ENCODE measurements at regions of chr5 and their contacts with region 1.

Region 1: DNA sequence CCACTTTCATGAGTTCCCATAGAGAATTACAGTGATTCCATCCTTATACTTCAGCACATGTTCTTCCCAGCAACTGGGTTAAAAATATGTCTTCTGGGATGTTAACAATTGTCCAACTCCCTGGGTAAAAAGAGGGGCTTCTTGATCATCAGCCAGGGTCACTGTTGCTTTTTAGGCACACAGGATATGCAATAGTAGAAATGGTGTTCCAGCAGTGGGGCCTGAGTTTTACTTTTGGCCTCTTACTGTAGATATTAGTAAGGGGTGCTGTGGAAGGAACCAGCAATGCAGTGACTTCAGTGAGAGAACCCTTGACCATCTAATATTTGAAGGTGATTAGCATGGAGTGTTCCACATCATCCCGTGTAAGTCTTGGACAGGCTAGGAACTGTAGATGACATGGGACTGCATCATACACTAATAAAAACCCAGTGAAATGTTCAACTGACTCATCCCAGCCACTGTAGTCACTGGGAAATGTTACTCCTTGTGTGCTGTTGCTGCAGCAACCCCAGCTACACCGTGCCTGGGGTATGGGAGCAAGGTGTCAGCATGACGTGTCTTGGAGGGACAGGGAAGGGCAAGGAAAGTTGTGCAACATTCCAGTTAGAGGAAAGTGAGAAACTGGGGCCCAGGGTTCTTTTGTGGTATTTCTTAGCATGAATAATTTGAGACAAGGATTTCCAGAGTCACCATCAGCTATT is 610.9 kb downstream of the RAB3C start:
- DNase-seq: peak; percentile 100
- H3K4me3 ChIP-seq: no peak overlapping the region
- H3K27ac ChIP-seq: peak overlapping the region; percentile 97
- H3K4me1 ChIP-seq: peaks cover 15% of the 10 kb centered on the region
- H3K27me3 ChIP-seq: no peaks in the 10 kb centered on the region
- CTCF ChIP-seq: no peak

Region 2: GRCh38 chr5:59115345-59115744 is 78.4 kb before region 1 on chr5:
- CTCF ChIA-PET with region 1: no interaction called
- dilution Hi-C with region 1: no loop called
- in situ Hi-C with region 1: no loop called
- intact Hi-C with region 1: no loop called
- DNase-seq: peak; percentile 18
- H3K4me3 ChIP-seq: no peak overlapping the region
- H3K27ac ChIP-seq: no peak overlapping the region
- H3K4me1 ChIP-seq: peaks cover 16% of the 10 kb centered on the region
- H3K27me3 ChIP-seq: no peaks in the 10 kb centered on the region
- CTCF ChIP-seq: no peak

Region 3: GRCh38 chr5:59296317-59297264 is 102.8 kb after region 1 on chr5:
- CTCF ChIA-PET with region 1: no interaction called
- dilution Hi-C with region 1: no loop called
- in situ Hi-C with region 1: no loop called
- intact Hi-C with region 1: loop called (anchors 1 kb)
- DNase-seq: peak; percentile 62
- H3K4me3 ChIP-seq: peak overlapping the region; percentile 36 to 49 (median 42)
- H3K27ac ChIP-seq: peak overlapping the region; percentile 78
- H3K4me1 ChIP-seq: peaks cover 35% of the 10 kb centered on the region
- H3K27me3 ChIP-seq: no peaks in the 10 kb centered on the region
- CTCF ChIP-seq: no peak

Region 4: DNA sequence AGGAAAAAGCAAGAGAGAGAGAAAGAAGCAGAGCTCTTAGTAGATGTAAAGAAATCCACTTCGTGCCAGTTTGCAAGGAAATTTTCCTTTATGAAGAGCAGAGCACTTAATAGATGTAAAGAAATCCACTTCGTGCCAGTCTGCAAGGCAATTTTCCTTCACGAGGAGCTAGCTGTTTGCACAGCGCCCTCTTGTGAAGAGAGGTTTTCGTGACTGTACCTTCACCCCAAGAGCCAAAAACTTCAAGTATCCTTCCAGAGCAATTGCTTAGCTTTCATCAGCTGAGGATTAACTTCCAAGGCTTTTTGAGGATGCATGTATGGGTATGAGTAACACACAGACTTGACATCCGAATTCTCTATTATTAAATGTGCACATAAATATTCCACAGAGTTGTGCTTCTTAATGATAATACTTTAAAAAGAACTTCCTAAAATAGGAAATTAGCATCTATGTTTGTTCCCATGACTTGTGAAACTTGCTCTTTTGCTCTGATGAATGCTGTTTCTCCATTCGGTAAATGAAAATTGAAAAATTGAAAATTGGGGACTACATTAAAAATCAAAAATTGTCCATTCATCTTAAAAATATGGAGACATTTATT is 174.1 kb after region 1 on chr5:
- CTCF ChIA-PET with region 1: interaction called, 12 read pairs
- dilution Hi-C with region 1: no loop called
- in situ Hi-C with region 1: loop called in 1 of 2 experiments (anchors 10 kb)
- intact Hi-C with region 1: loop called (anchors 1 kb)
- DNase-seq: peak; percentile 44
- H3K4me3 ChIP-seq: no peak overlapping the region
- H3K27ac ChIP-seq: no peak overlapping the region
- H3K4me1 ChIP-seq: no peaks in the 10 kb centered on the region
- H3K27me3 ChIP-seq: no peaks in the 10 kb centered on the region
- CTCF ChIP-seq: peak; percentile 78 to 88

Region 5: GRCh38 chr5:59673438-59674058 is 479.8 kb after region 1 on chr5:
- CTCF ChIA-PET with region 1: no interaction called
- dilution Hi-C with region 1: no loop called
- in situ Hi-C with region 1: no loop called
- intact Hi-C with region 1: loop called (anchors 10 kb)
- DNase-seq: peak; percentile 37
- H3K4me3 ChIP-seq: no peak overlapping the region
- H3K27ac ChIP-seq: no peak overlapping the region
- H3K4me1 ChIP-seq: no peaks in the 10 kb centered on the region
- H3K27me3 ChIP-seq: no peaks in the 10 kb centered on the region
- CTCF ChIP-seq: peak; percentile 58 to 67